GM13977 (cell line): ENCODE measurements at regions of chr11 and their contacts with region 1.

Region 1: GRCh38 chr11:66842896-66843775 is at the start of gene RCE1:
- DNase-seq: peak; percentile 98
- CTCF ChIP-seq: no peak

Region 2: DNA sequence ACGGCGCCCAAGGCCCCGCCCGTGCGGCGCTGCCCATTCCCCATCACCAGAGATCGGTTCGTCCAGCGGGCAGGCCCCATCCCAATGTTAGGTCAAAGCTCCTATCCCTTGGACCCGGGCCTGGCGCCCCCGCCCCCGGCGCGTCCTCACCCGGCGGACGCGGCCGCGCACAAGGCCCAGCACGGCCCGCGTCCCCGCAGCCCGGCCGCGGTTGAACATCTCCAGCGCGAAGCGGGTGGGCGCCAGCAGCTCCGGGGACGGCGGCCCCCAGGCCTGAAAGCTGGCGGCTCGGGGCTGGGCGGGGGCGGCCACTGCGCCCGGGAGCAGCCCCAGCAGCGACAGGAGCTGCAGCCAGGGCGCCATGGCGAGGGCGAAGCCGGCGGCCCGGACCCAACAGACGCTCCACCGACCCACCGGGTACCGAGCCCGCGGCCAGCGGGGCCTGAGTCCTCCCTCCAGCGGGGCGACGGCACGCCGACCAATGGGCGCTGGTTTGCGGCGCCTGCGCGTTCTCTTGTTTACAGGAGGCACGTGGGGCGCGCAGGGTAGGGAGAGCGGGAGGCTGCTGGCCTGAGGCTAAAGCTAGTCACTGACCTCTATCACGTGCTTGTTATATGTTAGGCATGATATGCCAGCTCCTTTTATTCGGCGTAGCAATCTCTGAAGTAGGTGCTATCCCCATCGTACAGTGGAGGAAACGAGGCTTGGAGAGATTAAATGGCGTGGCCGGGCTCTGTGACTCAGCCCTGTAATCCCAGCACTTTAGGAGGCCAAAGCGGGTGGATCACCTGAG is 274.8 kb before region 1 on chr11 and contains the start of gene CTSF:
- in situ Hi-C with region 1: loop called (anchors 25 kb)
- DNase-seq: peak; percentile 91
- CTCF ChIP-seq: no peak

Region 3: DNA sequence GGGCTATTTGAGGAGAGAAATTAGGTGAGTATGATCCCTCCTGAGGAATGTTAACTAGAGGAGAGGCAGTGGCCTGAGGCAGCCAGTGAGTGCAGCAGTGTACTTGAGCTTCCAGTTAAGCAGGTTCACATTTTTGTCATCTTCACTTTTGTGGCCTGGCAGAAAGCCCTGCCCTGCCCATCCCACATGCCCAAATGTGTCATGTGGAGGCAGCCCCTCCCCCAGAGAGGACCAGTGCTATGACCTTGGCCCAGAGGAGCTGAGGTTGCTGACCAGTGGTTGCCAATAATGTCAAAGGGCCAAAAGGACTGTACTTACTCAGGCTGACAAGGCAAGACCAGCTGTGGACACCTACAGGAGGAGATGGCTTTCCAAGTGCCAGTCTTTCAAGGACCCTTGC is 405.5 kb after region 1 on chr11:
- in situ Hi-C with region 1: no loop called
- DNase-seq: no peak
- CTCF ChIP-seq: no peak